Activated CD4-positive, alpha-beta memory T cell treated with anti-CD3 and anti-CD28 coated beads, Interleukin-2, amount 10 ng/mL, durations not matched to agents 7 days and 5 days (primary cell): ENCODE measurements at regions of chr4 and their contacts with region 1.

Region 1: GRCh38 chr4:108107729-108108382 is 60.9 kb downstream of the LEF1 start:
- DNase-seq: peak; percentile 52
- H3K4me3 Mint-ChIP-seq: peak overlapping the region; percentile 8
- H3K27ac Mint-ChIP-seq: peak overlapping the region; percentile 50
- H3K4me1 Mint-ChIP-seq: peaks cover 61% of the 10 kb centered on the region
- H3K27me3 Mint-ChIP-seq: peaks cover 36% of the 10 kb centered on the region

Region 2: DNA sequence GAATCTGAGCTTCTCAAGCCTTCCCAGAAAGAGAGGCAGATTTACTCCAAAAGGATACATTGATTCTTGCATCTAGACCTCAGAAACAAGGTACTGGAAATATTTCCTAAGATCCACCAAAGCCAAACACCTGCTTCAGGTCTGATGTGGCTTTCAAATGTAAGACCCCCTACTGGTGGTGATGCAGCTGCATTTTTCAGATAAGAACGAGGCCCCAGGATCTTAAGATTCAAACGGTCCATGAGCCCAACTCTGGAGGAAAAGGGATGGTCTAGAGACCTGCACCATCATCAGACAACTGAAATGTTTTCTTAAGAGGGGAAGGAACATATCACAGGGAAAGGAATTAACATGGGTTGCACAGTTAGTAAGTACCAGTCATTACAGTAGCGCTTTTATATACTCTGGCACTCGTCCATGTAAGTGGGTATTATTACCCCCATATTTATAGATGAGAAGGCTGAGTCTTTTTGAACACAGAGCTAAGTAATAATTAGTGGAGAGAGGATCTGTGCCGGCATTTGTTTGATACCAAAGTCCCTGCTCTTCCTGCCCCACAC is 12.9 kb before region 1 on chr4:
- CTCF ChIA-PET with region 1: interaction called, 4 read pairs
- POLR2A ChIA-PET with region 1: interaction called, 10 read pairs
- DNase-seq: no peak
- H3K4me3 Mint-ChIP-seq: no peak overlapping the region
- H3K27ac Mint-ChIP-seq: no peak overlapping the region
- H3K4me1 Mint-ChIP-seq: peaks cover 37% of the 10 kb centered on the region
- H3K27me3 Mint-ChIP-seq: no peaks in the 10 kb centered on the region

Region 3: GRCh38 chr4:108118490-108118889 is 10.6 kb after region 1 on chr4:
- CTCF ChIA-PET with region 1: no interaction called
- POLR2A ChIA-PET with region 1: interaction called, 33 read pairs
- DNase-seq: peak; percentile 49
- H3K4me3 Mint-ChIP-seq: peak overlapping the region; percentile 39
- H3K27ac Mint-ChIP-seq: peak overlapping the region; percentile 72
- H3K4me1 Mint-ChIP-seq: peaks cover 73% of the 10 kb centered on the region
- H3K27me3 Mint-ChIP-seq: no peaks in the 10 kb centered on the region

Region 4: GRCh38 chr4:108160741-108161352 is 53.0 kb after region 1 on chr4:
- CTCF ChIA-PET with region 1: no interaction called
- POLR2A ChIA-PET with region 1: interaction called, 21 read pairs
- DNase-seq: no peak
- H3K4me3 Mint-ChIP-seq: peak overlapping the region; percentile 52
- H3K27ac Mint-ChIP-seq: peak overlapping the region; percentile 56
- H3K4me1 Mint-ChIP-seq: peaks cover 71% of the 10 kb centered on the region
- H3K27me3 Mint-ChIP-seq: peaks cover 7% of the 10 kb centered on the region

Region 5: DNA sequence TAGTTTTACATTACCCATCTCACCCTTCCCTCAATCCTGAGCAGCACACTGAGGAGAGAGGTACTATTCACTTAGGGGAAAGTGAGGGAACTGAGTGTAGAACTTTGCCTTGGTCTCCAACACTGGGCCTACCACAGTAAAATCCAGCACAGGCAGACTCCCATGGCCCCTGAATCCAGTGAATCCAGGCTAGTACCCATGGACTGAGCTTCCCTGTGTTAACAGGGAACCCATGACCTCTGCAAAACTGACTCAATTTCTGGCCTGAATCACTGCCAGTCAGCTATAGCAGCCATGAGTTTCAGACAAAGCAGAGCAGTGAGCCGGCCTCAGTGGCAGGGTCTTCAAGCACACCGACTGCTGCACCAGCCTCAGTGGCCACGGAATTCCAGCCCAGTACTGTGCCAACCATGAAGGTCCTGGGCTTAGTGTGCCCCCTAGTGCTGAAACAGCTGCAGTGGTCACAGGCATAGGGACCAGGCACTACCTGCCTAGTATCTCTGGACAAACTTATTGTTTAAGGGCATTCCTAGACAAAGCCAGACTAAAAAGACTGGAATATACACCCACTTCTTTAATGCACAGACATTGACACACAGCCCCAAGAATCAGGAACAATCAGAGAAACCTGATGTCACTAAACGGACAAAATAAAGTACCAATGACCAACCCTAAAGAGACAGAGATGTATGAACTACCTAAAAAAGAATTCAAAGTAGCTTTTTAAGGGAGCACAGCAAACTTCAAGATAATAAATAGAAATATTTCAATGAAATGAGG is 385.1 kb after region 1 on chr4:
- CTCF ChIA-PET with region 1: no interaction called
- POLR2A ChIA-PET with region 1: no interaction called
- DNase-seq: peak; percentile 38
- H3K4me3 Mint-ChIP-seq: no peak overlapping the region
- H3K27ac Mint-ChIP-seq: no peak overlapping the region
- H3K4me1 Mint-ChIP-seq: no peaks in the 10 kb centered on the region
- H3K27me3 Mint-ChIP-seq: peaks cover 7% of the 10 kb centered on the region